ENCODE measurements at regions of chr11 and their contacts with region 1.

Region 1: GRCh38 chr11:1478544-1478943 is 8.0 kb downstream of the MOB2 start:
- DNase-seq: no peak
- H3K4me3 ChIP-seq: no peak overlapping the region
- H3K27ac ChIP-seq: no peak overlapping the region
- H3K4me1 ChIP-seq: peaks cover 0 to 9% of the 10 kb centered on the region in 2 donors
- H3K27me3 ChIP-seq: no peaks in the 10 kb centered on the region
- CTCF ChIP-seq: no peak
- POLR2A ChIP-seq: no peak

Region 2: DNA sequence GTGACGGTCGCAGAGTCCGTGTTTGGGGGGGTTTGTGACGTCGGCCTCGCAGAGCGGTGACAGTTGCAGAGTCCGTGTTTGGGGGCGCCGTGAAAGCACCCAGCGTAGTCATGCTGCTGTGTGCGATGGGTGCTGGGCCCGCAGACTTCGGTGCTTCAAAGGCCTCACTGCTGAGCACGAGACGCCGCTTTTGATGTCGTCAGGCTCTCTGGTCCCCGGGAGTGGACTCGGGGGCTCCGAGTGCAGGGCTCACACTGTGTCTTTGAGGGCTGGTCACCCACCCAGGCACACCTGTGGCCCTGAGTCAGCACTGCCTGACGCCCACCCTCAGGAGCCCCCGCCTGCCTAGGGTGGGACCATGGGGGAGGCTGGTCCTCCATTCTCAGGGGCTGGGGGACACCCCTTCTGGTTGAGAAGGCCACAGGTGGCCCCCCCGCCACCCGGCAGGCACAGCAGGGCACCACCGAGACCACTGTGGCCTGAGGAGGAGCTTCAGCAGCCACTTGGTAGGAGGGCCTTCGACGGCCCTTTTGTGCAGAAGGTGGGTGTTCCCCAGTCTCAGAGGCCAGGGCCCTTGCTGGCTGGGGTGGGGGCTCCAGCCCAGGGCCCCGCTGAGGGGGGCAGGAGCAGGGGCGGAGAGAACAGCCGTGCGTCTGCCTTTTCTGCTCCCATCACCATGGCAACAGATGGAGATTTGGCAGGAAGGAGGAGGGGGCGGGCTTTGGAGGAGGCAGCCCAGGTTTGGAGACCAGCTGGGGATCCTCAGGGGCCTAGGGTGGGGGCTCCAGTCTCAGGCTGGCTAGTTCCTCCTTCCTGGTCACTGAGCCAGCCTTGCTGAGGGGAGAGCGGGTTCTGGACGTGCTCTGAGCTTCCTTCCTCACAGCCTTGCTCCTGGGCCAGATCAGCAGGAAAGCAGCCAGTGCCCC is 67.9 kb before region 1 on chr11:
- intact Hi-C with region 1: loop called in 1 of 2 experiments (anchors 10 kb)
- DNase-seq: no peak
- H3K4me3 ChIP-seq: no peak overlapping the region
- H3K27ac ChIP-seq: no peak overlapping the region
- H3K4me1 ChIP-seq: no peaks in the 10 kb centered on the region
- H3K27me3 ChIP-seq: no peaks in the 10 kb centered on the region
- CTCF ChIP-seq: no peak
- POLR2A ChIP-seq: no peak

Measured in adrenal gland (tissue), 19 donors.